CD8-positive, alpha-beta T cell (primary cell): ENCODE measurements at regions of chr15 and their contacts with region 1.

Region 1: DNA sequence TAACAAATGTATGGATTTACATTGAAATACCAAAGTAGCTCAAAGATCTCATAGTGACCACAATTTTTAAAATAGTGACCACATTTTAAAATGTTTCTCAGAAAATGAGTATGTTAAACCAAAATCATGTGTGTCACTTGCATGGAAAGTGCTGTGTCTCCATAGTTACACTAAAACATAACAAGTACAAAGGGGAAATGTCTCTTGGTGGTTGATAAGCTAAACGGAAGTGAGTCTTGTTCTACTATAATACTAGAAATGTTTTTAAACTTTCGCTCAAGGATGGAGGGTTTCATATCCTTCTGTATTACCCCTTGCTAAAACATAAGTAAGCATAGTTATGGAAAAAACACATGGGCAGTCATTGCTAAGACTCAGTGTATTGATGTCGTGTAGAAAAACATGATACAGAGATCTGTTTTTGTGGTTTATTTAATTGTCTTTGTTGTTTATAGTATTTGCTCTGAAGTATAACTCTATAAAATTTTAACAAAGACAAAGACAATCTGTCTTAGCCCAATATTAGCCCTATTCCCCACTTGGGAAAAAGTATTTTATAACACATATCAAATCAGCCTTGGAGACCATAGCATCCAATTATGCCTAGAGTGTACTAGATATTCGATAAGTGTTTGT is 27.0 kb upstream of the DENND4A start:
- DNase-seq: peak in 2 of 9 experiments; percentile 86 to 94
- ATAC-seq: peak; percentile 90
- H3K4me3 ChIP-seq: peak overlapping the region in 1 of 2 experiments; percentile 2
- H3K4me3 Mint-ChIP-seq: peak overlapping the region; percentile 59
- H3K27ac ChIP-seq: peak overlapping the region; percentile 84 to 88
- H3K27ac Mint-ChIP-seq: peak overlapping the region; percentile 92
- H3K4me1 ChIP-seq: peaks cover 39% of the 10 kb centered on the region
- H3K4me1 Mint-ChIP-seq: peaks cover 49% of the 10 kb centered on the region
- H3K27me3 ChIP-seq: no peaks in the 10 kb centered on the region
- H3K27me3 Mint-ChIP-seq: no peaks in the 10 kb centered on the region
- CTCF ChIP-seq: no peak

Region 2: GRCh38 chr15:64507293-64507802 is 1311.7 kb before region 1 on chr15:
- CTCF ChIA-PET with region 1: no interaction called
- POLR2A ChIA-PET with region 1: no interaction called
- intact Hi-C with region 1: no loop called
- DNase-seq: peak in 6 of 9 experiments; percentile 23 to 58 (median 34)
- ATAC-seq: peak; percentile 68
- H3K4me3 ChIP-seq: no peak overlapping the region
- H3K4me3 Mint-ChIP-seq: peak overlapping the region; percentile 16
- H3K27ac ChIP-seq: no peak overlapping the region
- H3K27ac Mint-ChIP-seq: peak overlapping the region; percentile 64
- H3K4me1 ChIP-seq: peaks cover 85% of the 10 kb centered on the region
- H3K4me1 Mint-ChIP-seq: peaks cover 78% of the 10 kb centered on the region
- H3K27me3 ChIP-seq: no peaks in the 10 kb centered on the region
- H3K27me3 Mint-ChIP-seq: no peaks in the 10 kb centered on the region
- CTCF ChIP-seq: no peak

Region 3: GRCh38 chr15:65804252-65804931 is 14.7 kb before region 1 on chr15:
- CTCF ChIA-PET with region 1: interaction called, 4 read pairs
- POLR2A ChIA-PET with region 1: interaction called, 16 read pairs
- intact Hi-C with region 1: loop called in 1 of 2 experiments (anchors 2 kb)
- DNase-seq: no peak
- ATAC-seq: no peak
- H3K4me3 ChIP-seq: no peak overlapping the region
- H3K4me3 Mint-ChIP-seq: no peak overlapping the region
- H3K27ac ChIP-seq: peak overlapping the region in 1 of 2 experiments; percentile 47
- H3K27ac Mint-ChIP-seq: peak overlapping the region; percentile 88
- H3K4me1 ChIP-seq: peaks cover 36% of the 10 kb centered on the region
- H3K4me1 Mint-ChIP-seq: peaks cover 34% of the 10 kb centered on the region
- H3K27me3 ChIP-seq: no peaks in the 10 kb centered on the region
- H3K27me3 Mint-ChIP-seq: no peaks in the 10 kb centered on the region
- CTCF ChIP-seq: no peak